ENCODE measurements at regions of chr1 and their contacts with region 1.

Region 1: DNA sequence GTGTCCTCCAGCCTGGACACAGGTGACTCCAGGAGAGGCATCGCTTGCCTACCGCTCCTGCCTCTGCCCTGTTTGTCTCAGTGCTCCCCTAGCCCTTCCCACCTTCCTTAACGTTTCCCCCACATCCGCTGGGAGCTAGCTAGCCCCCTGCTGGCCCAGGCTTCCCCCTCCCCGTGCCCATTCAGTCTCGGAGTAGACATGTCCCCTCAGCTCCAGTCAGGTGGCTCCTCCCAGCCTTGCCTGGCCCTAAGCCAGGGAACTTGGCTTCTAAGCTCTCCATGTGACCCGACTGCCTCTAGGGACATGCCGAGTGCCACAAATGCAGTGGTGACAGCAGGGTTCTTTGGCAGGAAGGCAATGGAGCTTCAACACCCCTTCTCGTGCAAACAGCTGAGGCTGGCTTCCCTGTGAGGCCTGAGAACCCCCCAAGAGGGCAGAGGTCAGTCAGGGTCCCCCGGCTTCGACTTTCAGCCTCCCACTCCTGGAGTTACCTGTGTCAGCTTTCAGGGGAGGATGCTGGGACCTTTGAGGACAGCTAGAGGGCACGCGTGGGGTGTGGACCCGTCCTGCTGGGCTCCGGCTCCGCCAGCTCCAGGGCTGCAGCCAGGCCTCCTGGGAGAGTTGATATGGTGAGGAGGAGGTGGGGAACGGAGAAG is 16.2 kb downstream of the DRAXIN start:
- DNase-seq: no peak
- H3K4me3 ChIP-seq: no peak overlapping the region
- H3K27ac ChIP-seq: no peak overlapping the region
- H3K4me1 ChIP-seq: peaks cover 7 to 36% (median 26%) of the 10 kb centered on the region in 4 experiments
- H3K27me3 ChIP-seq: no peaks in the 10 kb centered on the region
- CTCF ChIP-seq: no peak
- EP300 ChIP-seq: no peak
- POLR2A ChIP-seq: no peak
- RAD21 ChIP-seq: no peak

Region 2: DNA sequence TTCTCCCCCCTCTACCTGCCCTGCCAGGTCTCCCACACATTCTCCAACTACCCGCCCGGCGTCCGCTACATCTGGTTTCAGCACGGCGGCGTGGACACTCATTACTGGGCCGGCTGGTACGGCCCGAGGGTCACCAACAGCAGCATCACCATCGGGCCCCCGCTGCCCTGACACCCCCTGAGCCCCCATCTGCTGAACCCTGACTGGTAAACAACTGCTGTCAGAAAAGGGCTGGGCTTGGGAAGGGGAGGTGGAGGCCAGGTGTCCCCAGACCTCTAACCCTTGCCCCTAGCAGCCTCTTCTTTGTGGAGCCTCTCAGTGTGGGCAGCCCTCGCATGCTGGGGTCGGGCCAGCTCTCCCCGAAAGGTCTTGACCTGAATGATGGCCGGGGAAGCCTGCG is 46.6 kb before region 1 on chr1:
- CTCF ChIA-PET with region 1: interaction called, 104 read pairs
- POLR2A ChIA-PET with region 1: interaction called, 13 read pairs
- DNase-seq: no peak
- H3K4me3 ChIP-seq: no peak overlapping the region
- H3K27ac ChIP-seq: no peak overlapping the region
- H3K4me1 ChIP-seq: no peaks in the 10 kb centered on the region
- H3K27me3 ChIP-seq: no peaks in the 10 kb centered on the region; a peak in 2 of 7 replicates
- CTCF ChIP-seq: no peak
- EP300 ChIP-seq: no peak
- POLR2A ChIP-seq: no peak
- RAD21 ChIP-seq: no peak